ENCODE measurements at regions of chrX and their contacts with region 1.

Region 1: GRCh38 chrX:10482261-10482660 is 138.1 kb downstream of the MID1 start:
- DNase-seq: no peak
- H3K4me3 ChIP-seq: no peak overlapping the region
- H3K27ac ChIP-seq: no peak overlapping the region
- H3K4me1 ChIP-seq: peaks cover 28% of the 10 kb centered on the region
- H3K27me3 ChIP-seq: no peaks in the 10 kb centered on the region

Region 2: GRCh38 chrX:10217198-10217597 is 265.1 kb before region 1 on chrX:
- in situ Hi-C with region 1: loop called (anchors 25 kb)
- DNase-seq: no peak
- H3K4me3 ChIP-seq: no peak overlapping the region
- H3K27ac ChIP-seq: no peak overlapping the region
- H3K4me1 ChIP-seq: no peaks in the 10 kb centered on the region
- H3K27me3 ChIP-seq: no peaks in the 10 kb centered on the region

Region 3: DNA sequence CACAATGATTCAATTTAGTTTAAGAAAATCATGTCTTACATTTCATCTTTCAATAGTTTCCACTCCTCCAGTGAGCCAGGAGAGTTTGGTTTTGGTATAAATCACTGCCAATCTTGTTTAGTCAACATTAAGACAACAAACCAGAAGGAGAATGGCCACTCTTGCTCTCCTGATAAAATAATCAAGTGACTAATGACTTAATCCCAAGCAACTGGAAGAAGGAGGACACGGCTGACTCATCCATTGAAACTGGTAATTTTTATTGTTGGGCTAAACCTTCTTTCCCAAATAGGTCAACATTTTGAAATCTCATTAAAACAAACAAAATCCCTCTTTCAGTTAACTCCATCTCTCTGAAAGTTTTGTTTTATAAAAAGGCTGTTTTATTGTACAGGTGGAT is 95.2 kb before region 1 on chrX:
- in situ Hi-C with region 1: loop called (anchors 25 kb)
- DNase-seq: peak; percentile 55
- H3K4me3 ChIP-seq: no peak overlapping the region
- H3K27ac ChIP-seq: no peak overlapping the region
- H3K4me1 ChIP-seq: no peaks in the 10 kb centered on the region
- H3K27me3 ChIP-seq: no peaks in the 10 kb centered on the region

Measured in GM23248 (cell line).